ENCODE measurements at regions of chr5 and their contacts with region 1.

Region 1: GRCh38 chr5:59367791-59368394 is 525.6 kb downstream of the PDE4D start:
- DNase-seq: peak; percentile 73
- H3K4me3 Mint-ChIP-seq: no peak overlapping the region
- H3K27ac Mint-ChIP-seq: no peak overlapping the region
- H3K4me1 Mint-ChIP-seq: peaks cover 5% of the 10 kb centered on the region
- H3K27me3 Mint-ChIP-seq: peaks cover 3% of the 10 kb centered on the region

Region 2: GRCh38 chr5:59218424-59219045 is 149.4 kb before region 1 on chr5:
- CTCF ChIA-PET with region 1: interaction called, 21 read pairs
- intact Hi-C with region 1: loop called (anchors 1 kb)
- DNase-seq: no peak
- H3K4me3 Mint-ChIP-seq: no peak overlapping the region
- H3K27ac Mint-ChIP-seq: no peak overlapping the region
- H3K4me1 Mint-ChIP-seq: no peaks in the 10 kb centered on the region
- H3K27me3 Mint-ChIP-seq: peaks cover 5% of the 10 kb centered on the region

Region 3: DNA sequence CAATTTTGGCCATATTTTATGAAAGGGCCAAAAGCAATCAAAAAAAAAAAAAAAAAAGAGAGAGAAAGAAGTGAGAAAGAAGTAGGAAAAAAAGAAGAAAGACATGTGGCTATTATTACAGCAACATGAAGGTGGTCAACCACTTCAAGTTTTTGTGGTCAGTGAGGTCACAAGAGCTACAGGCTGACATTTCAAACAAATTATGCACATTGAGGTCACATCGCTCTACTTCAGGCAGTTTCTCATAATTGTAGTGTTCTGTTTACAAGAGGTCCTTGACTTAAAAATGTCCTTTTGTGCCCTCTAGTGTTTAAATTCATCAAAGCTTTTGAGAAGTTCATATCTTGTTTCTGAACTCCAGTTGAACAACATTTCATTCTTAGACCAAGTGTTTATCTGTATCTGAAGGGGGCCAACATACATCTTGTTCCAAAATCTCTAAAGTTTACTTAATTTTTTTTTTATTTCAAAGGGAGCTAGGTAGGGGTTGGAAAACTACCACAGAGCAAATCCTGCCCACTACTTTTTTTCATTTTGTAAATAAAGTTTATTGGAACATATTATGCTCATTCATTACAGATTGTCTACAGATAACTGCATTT is 12.6 kb after region 1 on chr5:
- CTCF ChIA-PET with region 1: interaction called, 17 read pairs
- intact Hi-C with region 1: loop called (anchors 1 kb)
- DNase-seq: peak; percentile 15
- H3K4me3 Mint-ChIP-seq: no peak overlapping the region
- H3K27ac Mint-ChIP-seq: no peak overlapping the region
- H3K4me1 Mint-ChIP-seq: no peaks in the 10 kb centered on the region
- H3K27me3 Mint-ChIP-seq: no peaks in the 10 kb centered on the region

Region 4: GRCh38 chr5:59722875-59723274 is 355.0 kb after region 1 on chr5:
- CTCF ChIA-PET with region 1: no interaction called
- intact Hi-C with region 1: no loop called
- DNase-seq: no peak
- H3K4me3 Mint-ChIP-seq: no peak overlapping the region
- H3K27ac Mint-ChIP-seq: no peak overlapping the region
- H3K4me1 Mint-ChIP-seq: peaks cover 3% of the 10 kb centered on the region
- H3K27me3 Mint-ChIP-seq: peaks cover 4% of the 10 kb centered on the region